ENCODE measurements at regions of chr5 and their contacts with region 1.

Region 1: DNA sequence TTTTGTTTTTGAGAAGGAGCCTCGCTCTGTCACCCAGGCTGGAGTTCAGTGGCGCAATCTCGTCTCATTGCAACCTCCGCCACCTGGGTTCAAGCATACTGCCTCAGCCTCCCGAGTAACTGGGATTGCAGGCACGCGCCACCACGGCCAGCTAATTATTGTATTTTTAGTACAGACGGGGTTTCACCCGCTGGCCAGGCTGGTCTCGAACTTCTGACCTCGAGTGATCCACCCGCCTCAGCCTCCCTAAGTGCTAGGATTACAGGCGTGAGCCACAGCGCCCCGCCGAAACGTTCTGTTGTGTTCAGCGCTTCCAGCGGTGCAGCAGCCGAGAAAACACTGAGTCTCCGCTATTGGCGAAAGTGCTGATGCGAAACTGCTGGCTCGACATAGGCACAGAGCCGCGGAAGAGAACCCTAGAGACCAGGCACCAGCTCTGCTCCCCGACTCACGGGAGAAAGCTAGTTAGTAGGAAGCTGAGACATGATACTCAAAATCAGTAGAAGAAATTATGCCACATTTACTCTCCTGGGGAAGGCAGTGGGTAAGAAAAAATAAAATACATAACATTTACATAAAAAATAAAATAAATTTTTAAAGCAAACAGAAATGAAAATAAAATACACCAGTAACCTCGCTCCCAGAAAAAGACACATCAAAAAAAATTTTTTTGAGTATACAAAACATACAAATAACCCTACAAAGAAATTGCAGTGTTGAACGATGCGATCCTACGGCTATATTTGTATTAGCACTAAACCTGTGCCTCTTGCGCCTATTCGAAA is 31.6 kb downstream of the ANXA2R start:
- DNase-seq: peak; percentile 98
- ATAC-seq: peak; percentile 64
- H3K4me3 ChIP-seq: peak overlapping the region; percentile 66
- H3K27ac ChIP-seq: peak overlapping the region; percentile 71
- H3K4me1 ChIP-seq: peaks cover 14% of the 10 kb centered on the region; the same call in 1 of the 2 replicates
- H3K27me3 ChIP-seq: no peaks in the 10 kb centered on the region
- CTCF ChIP-seq: peak; percentile 48; the same call in 1 of the 2 replicates

Region 2: GRCh38 chr5:43019614-43020293 is 11.2 kb after region 1 on chr5:
- CTCF ChIA-PET with region 1: interaction called, 3 read pairs
- POLR2A ChIA-PET with region 1: interaction called, 4 read pairs
- intact Hi-C with region 1: loop called (anchors 1 kb)
- DNase-seq: peak; percentile 97
- ATAC-seq: peak; percentile 66
- H3K4me3 ChIP-seq: peak overlapping the region; percentile 80
- H3K27ac ChIP-seq: peak overlapping the region; percentile 85
- H3K4me1 ChIP-seq: peaks cover 39% of the 10 kb centered on the region
- H3K27me3 ChIP-seq: no peaks in the 10 kb centered on the region
- CTCF ChIP-seq: peak; percentile 67

Measured in PC-3 (cell line).